A673 (cell line): ENCODE measurements at regions of chr2 and their contacts with region 1.

Region 1: GRCh38 chr2:10448208-10448645 is at the start of gene ODC1:
- DNase-seq: peak; percentile 97
- H3K4me3 ChIP-seq: peak within 1 kb of the TSS; percentile 64
- H3K27ac ChIP-seq: peak within 1 kb of the TSS; percentile 93
- H3K4me1 ChIP-seq: peaks cover 21% of the 10 kb centered on the region
- H3K27me3 ChIP-seq: no peaks in the 10 kb centered on the region
- CTCF ChIP-seq: no peak
- total RNA-seq, gene ODC1: 221 and 269 TPM in 2 replicates

Region 2: GRCh38 chr2:10188216-10188615 is 260.0 kb before region 1 on chr2:
- CTCF ChIA-PET with region 1: no interaction called
- POLR2A ChIA-PET with region 1: no interaction called
- intact Hi-C with region 1: no loop called
- DNase-seq: peak; percentile 28
- H3K4me3 ChIP-seq: no peak overlapping the region
- H3K27ac ChIP-seq: no peak overlapping the region
- H3K4me1 ChIP-seq: no peaks in the 10 kb centered on the region
- H3K27me3 ChIP-seq: no peaks in the 10 kb centered on the region
- CTCF ChIP-seq: peak; percentile 30; the same call in 1 of the 2 replicates

Region 3: GRCh38 chr2:10424051-10424450 is 24.2 kb before region 1 on chr2:
- CTCF ChIA-PET with region 1: no interaction called
- POLR2A ChIA-PET with region 1: no interaction called
- intact Hi-C with region 1: no loop called
- DNase-seq: peak; percentile 94
- H3K4me3 ChIP-seq: no peak overlapping the region
- H3K27ac ChIP-seq: no peak overlapping the region
- H3K4me1 ChIP-seq: peaks cover 5% of the 10 kb centered on the region
- H3K27me3 ChIP-seq: no peaks in the 10 kb centered on the region
- CTCF ChIP-seq: no peak

Region 4: DNA sequence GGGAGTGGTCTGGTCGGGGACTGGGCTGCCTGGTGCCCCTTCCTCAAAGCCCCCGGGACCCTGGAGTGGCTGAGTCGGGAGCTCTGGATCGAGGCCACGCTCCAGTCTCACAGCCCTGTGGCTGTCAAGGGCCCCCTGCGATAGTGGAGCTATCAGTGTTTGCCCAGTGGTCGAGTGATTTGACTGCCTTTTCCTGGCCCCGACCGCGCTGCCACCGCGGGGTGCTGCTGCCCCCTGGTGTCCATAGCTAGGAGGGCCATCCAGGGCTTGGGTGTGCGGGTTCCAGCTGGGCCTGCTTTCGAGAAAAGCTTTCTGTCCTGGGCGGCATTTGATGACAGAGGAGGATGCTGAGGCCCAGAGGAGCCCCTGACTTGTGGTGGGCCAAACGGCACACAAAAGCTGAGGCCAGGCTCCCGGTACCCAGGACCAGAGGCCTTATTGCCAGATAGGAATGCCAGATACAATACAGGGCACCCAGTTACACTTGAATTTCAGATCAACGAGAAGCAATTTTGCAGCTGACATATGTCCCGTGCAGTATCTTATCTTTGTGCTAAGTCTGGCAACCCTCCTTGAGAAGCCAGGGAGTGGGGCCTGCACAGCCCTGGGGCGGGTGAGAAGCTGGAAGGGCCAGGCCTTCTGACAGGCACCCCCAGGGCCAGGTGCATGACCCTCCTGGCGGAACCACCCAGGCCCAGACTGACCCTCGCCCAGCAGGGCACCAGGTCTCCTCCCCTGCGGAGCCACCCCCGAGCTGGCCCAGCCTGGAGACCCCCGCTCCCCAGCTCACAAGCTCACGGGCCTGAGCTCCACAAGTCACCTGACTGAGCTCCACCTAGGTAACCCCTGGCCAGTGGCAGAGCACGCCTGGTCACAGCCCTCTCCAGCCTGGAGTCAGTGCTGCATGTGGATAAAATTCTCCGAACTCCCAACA is 13.1 kb before region 1 on chr2:
- CTCF ChIA-PET with region 1: interaction called, 10 read pairs
- POLR2A ChIA-PET with region 1: interaction called, 3 read pairs
- intact Hi-C with region 1: no loop called
- DNase-seq: peak; percentile 84
- H3K4me3 ChIP-seq: no peak overlapping the region
- H3K27ac ChIP-seq: no peak overlapping the region
- H3K4me1 ChIP-seq: no peaks in the 10 kb centered on the region
- H3K27me3 ChIP-seq: no peaks in the 10 kb centered on the region
- CTCF ChIP-seq: peak; percentile 96

Region 5: DNA sequence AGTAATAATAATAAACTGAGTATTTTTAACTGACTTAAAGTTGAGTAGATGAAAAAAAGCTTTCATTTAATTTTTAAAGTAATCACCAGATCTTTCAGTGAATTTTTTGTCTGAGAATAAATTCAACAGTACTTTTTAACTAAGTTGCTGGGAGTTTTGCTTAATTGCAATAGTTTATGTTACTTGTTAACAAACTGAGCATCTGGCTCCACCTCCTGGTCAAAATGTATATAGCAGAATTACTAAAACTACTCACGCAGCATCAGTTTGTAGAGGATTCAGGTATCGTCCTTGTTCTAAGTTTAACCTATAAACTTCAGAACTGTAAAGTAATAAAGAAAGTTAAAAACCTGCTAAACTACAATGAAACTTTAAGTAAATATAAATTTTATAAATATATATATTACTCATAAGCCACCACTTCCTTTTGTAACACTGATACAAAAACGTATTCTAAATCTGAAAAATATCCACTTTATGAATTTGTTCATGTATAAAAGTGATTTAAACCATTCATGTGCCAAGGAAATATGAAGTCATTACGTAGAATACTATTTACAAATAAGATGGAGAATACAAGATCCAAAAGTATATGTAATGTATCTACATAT is 220.3 kb after region 1 on chr2:
- CTCF ChIA-PET with region 1: no interaction called
- POLR2A ChIA-PET with region 1: no interaction called
- intact Hi-C with region 1: loop called (anchors 5 kb)
- DNase-seq: peak; percentile 78
- H3K4me3 ChIP-seq: no peak overlapping the region
- H3K27ac ChIP-seq: no peak overlapping the region
- H3K4me1 ChIP-seq: no peaks in the 10 kb centered on the region
- H3K27me3 ChIP-seq: no peaks in the 10 kb centered on the region
- CTCF ChIP-seq: peak; percentile 73

Region 6: DNA sequence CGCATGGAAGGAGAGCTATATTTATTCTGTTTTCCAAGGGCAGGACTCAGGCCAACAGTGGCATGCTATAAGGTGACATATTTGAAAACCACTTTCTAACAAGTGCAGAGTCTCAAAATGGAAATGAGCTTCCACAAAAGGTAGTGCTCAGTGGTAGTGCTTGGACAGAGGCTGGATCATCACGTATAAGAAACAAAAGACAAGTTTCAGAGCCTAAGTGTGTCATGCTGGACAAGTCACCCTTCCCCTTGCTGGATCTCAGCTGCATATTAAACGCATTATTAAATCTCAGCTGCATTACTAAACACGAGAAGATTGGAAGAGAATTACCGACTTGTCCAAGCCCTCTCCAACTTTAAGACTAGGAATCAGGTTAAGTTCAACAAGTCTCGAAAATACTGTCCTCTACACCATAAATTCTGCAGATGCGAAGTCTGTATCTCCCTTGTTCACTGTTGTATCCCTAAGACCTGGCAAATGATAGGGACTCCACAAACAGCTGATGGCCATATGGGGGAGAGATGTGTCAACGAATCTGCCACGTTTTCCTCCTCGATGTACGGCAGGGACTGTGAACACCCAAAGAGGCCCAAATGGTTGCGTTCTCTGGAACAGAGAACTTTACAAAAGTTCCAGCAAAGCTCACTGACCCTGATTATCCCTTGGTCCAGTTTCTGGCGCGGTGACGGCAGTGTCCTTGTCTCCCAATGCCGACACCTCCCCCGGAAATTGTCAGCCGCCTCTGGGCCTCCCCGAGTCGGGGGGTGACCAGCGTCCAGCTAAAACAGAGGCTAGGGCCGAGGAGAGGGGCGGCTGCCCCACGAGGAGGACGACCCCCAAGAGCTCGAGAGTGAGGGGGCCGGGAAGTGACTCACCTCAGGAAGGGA is 240.9 kb after region 1 on chr2:
- CTCF ChIA-PET with region 1: no interaction called
- POLR2A ChIA-PET with region 1: interaction called, 11 read pairs
- intact Hi-C with region 1: no loop called
- DNase-seq: no peak
- H3K4me3 ChIP-seq: peak overlapping the region; percentile 90
- H3K27ac ChIP-seq: peak overlapping the region; percentile 76
- H3K4me1 ChIP-seq: peaks cover 8% of the 10 kb centered on the region
- H3K27me3 ChIP-seq: no peaks in the 10 kb centered on the region
- CTCF ChIP-seq: no peak